T-cell (primary cell): ENCODE measurements at regions of chr2 and their contacts with region 1.

Region 1: GRCh38 chr2:6872394-6872793 is 5.2 kb upstream of the RSAD2 start:
- DNase-seq: no peak
- ATAC-seq: no peak
- H3K4me3 ChIP-seq: no peak overlapping the region
- H3K4me3 Mint-ChIP-seq: peak overlapping the region in 1 of 3 donors; percentile 0
- H3K27ac ChIP-seq: no peak overlapping the region
- H3K27ac Mint-ChIP-seq: peak overlapping the region; percentile 45 to 83
- H3K4me1 ChIP-seq: peaks cover 0 to 22% of the 10 kb centered on the region in 2 experiments
- H3K4me1 Mint-ChIP-seq: peaks cover 22 to 49% (median 33%) of the 10 kb centered on the region in 3 donors
- H3K27me3 ChIP-seq: no peaks in the 10 kb centered on the region
- H3K27me3 Mint-ChIP-seq: no peaks in the 10 kb centered on the region

Region 2: GRCh38 chr2:6945087-6945813 is 72.9 kb after region 1 on chr2:
- CTCF ChIA-PET with region 1: no interaction called
- POLR2A ChIA-PET with region 1: no interaction called
- DNase-seq: no peak
- ATAC-seq: no peak
- H3K4me3 ChIP-seq: no peak overlapping the region
- H3K4me3 Mint-ChIP-seq: no peak overlapping the region
- H3K27ac ChIP-seq: no peak overlapping the region
- H3K27ac Mint-ChIP-seq: peak overlapping the region; percentile 33 to 50
- H3K4me1 ChIP-seq: peaks cover 0 to 8% of the 10 kb centered on the region in 2 experiments
- H3K4me1 Mint-ChIP-seq: peaks cover 47 to 54% (median 49%) of the 10 kb centered on the region in 3 donors
- H3K27me3 ChIP-seq: no peaks in the 10 kb centered on the region
- H3K27me3 Mint-ChIP-seq: no peaks in the 10 kb centered on the region

Region 3: DNA sequence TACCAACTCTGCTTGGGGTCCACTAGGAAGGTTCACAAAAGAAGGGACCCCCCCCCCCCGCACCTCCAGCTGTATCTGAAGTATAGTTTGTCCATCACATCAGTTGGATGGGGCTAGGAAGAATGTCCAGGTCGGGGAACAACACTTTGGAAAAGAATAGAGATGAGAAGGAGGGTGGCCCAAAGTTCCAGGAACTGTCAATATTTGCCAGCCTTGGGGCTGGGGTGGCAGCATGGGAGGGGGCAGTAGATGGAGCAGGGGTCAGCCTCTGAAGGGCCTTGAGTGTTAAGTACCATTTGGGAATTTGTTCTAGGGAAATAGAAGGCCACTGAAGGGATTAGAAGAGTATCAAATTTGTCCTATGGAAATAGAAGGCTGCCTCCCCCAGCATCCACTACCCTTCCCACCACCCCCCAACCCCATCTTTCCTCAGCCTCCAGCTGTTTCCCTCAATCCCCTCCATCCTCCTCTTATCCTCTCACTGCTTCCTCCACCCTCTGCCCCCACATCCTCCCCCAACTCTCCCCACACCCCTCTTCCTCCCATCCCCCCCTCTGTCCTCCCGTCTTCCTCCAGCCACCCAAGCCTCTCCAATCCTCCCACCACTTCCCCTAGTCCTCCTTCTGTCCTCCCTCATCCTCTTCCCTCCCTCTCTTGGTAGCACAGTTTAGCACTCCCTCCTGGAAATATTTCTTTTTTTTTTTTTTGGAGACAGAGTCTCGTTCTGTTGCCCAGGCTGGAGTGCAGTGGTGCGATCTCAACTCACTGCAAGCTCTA is 1967.0 kb after region 1 on chr2:
- CTCF ChIA-PET with region 1: no interaction called
- POLR2A ChIA-PET with region 1: interaction called in 1 of 2 experiments, 11 read pairs
- DNase-seq: no peak
- ATAC-seq: no peak
- H3K4me3 ChIP-seq: no peak overlapping the region
- H3K4me3 Mint-ChIP-seq: no peak overlapping the region
- H3K27ac ChIP-seq: no peak overlapping the region
- H3K27ac Mint-ChIP-seq: no peak overlapping the region
- H3K4me1 ChIP-seq: peaks cover 17 to 30% of the 10 kb centered on the region in 2 experiments
- H3K4me1 Mint-ChIP-seq: peaks cover 34 to 41% (median 34%) of the 10 kb centered on the region in 3 donors
- H3K27me3 ChIP-seq: peaks cover 0 to 9% of the 10 kb centered on the region in 2 experiments
- H3K27me3 Mint-ChIP-seq: peaks cover 0 to 4% of the 10 kb centered on the region in 2 donors